BJ (cell line): ENCODE measurements at regions of chr16 and their contacts with region 1.

Region 1: DNA sequence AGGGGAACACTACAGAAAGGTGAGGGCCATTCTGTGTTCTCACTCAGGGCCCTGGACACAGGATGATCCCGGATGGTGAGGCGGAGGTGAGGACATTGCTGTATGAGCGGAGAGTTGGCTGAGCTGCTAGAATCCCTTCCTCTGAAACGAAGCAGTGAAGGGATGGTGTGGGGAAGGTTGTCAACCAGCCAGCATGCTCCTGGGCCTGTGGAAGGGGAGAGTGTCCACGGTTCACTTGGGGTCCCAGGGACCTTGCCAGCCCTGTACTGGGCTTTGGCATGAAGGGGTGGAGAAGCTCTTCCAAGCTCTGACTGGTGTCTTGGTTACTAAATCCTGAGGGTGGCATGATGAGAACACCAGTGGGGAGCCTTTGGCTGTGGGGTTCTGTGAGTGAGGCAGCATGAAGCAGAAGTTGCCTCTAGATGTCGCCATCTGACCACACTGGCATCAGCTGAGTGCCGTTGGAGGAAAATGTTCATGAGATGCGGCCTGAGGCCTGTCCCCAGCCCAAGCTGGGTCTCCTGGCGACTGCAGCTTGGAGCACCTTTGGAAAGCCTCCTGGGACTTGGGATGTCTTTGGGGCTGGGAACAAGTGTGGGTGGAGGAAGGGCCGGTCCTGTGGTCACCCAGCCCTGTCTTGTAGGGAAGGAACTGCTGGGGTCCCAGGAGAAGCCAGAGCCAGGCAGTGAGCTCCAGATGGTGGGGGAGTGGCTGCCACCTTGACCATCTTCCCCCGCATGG is 14.8 kb downstream of the PDP2 start:
- DNase-seq: no peak
- H3K4me3 ChIP-seq: no peak overlapping the region
- H3K27me3 ChIP-seq: no peaks in the 10 kb centered on the region
- CTCF ChIP-seq: peak; percentile 93

Region 2: DNA sequence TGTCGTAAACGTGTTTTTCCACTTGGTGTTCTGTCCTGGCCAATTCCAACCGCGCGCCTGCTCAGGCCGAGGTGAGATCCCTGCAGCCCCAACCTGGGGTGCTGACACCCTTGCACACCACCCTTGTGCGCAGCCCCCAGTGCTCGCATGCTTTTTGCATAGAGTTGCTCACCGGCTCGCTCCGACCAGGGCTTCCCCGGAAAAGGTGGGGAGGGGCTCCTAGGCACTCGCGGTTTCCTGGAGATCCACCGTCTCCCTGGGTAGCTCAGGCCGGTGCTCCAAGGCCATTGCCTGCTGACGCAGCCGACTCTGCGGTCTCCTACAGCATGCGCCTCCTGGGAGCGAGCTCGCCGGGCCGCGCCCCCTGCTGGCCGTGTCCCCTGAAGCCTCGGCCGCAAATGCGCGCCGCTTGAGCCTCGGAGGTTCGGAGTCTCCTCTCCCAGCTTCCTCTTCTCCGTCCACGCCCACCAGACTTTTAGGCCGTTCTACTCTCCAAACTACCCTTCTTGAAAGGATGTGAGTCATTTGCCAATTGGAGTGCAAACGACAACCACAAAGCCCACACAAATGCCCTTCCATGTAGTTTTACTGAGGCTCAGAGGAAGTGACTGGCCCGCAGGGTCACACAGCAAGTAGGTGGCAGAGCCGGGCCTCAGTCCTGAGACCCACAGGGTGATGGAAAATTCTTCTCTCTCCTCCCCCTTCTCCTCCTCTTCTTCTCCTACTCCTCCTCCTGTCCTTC is 22.0 kb before region 1 on chr16:
- CTCF ChIA-PET with region 1: interaction called, 11 read pairs
- POLR2A ChIA-PET with region 1: no interaction called
- DNase-seq: peak; percentile 97
- H3K4me3 ChIP-seq: 0 out of 2 replicates have a peak overlapping the region, but pooled peaks have one; percentile 2
- H3K27me3 ChIP-seq: no peaks in the 10 kb centered on the region
- CTCF ChIP-seq: peak; percentile 97

Region 3: DNA sequence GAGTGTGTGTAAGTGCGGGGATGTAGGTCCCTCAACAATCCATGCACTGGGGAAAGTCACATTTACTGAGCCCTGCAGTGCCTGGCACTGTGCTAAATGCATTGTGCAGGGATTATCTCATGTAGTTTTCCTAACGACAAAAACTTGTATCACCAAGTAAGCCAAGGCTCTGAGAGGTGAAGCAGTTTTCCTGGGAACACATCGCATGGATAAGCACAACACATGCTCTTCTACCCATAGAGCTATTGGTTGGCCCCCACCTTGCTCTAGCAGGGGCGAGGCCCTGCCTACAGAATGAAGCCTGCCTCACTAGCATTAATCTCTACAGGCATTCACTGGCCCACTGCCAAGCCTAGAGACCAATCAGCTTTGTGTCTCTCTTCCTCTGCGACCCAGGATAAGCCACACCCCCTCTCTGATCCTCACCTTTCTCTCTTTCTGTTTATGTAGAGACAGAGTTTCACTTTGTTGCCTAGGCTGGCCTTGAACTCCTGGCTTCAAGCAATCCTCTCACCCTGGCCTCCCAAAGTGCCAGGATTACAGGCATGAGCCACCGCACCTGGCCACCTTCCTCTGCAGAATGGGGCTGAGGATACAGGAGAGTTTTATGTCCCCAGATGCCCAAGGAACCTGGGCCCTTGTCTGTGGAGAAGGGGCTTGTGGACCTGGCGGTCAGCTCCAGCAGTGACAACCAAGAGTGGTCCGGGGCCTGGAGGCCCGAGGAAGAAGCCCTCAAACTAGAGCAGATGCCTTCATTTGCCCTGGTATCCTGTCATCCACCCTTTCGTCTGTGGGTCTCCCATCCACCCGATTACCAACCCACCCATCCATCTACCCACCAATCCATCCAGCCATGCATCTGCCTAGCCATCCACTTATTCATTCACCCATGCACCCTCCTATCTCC is 10.8 kb after region 1 on chr16:
- CTCF ChIA-PET with region 1: interaction called, 33 read pairs
- POLR2A ChIA-PET with region 1: no interaction called
- DNase-seq: no peak
- H3K4me3 ChIP-seq: no peak overlapping the region
- H3K27me3 ChIP-seq: no peaks in the 10 kb centered on the region; the same call in none of the 2 replicates
- CTCF ChIP-seq: no peak

Region 4: GRCh38 chr16:66918803-66919568 is 23.9 kb after region 1 on chr16 and contains the start of gene CDH16:
- CTCF ChIA-PET with region 1: interaction called, 118 read pairs
- POLR2A ChIA-PET with region 1: no interaction called
- DNase-seq: no peak
- H3K4me3 ChIP-seq: no peak within 1 kb of the TSS
- H3K27me3 ChIP-seq: peaks cover 19% of the 10 kb centered on the region
- CTCF ChIP-seq: no peak
- polyA plus RNA-seq, gene CDH16: not detected in 2 replicates

Region 5: DNA sequence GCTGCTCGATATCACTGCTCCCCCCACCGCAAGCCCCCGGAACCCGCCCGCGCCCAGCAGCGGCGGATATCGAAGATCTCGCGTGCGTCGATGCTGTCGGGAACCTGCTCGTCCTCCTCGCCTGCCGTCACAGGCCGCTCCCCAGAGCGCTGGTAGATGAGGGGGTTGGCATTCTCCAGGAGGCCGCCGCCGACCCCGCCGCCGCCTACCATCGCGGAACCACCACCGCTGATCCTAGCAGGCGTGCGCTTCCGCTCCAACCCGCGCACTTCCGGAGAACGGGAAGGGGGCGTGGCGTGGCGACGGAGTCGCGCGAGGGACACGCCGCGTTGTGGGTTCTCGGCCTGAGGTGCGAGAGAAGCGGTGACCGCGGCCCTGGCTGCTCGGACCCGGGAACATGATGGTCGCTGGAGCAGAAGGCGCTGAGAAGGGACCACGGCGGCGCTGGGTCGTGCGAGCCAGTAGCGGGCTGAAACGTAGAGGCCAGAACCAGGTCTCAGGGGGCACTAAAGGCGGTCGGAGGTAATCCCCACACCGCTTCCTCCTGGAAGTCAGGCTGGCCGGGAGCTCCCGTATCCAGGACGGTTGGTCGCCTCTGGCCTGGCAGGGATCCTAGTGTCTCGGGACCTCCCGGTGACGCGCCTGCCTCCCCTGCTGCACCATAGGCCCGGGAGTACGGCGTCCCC is 39.2 kb after region 1 on chr16 and contains the start of gene CIAO2B:
- CTCF ChIA-PET with region 1: interaction called, 118 read pairs
- POLR2A ChIA-PET with region 1: no interaction called
- DNase-seq: no peak
- H3K4me3 ChIP-seq: peak within 1 kb of the TSS; percentile 74
- H3K27me3 ChIP-seq: no peaks in the 10 kb centered on the region
- CTCF ChIP-seq: no peak
- polyA plus RNA-seq, gene CIAO2B: 155 and 171 TPM in 2 replicates

Region 6: GRCh38 chr16:66954097-66954659 is 59.1 kb after region 1 on chr16:
- CTCF ChIA-PET with region 1: interaction called, 16 read pairs
- POLR2A ChIA-PET with region 1: no interaction called
- DNase-seq: no peak
- H3K4me3 ChIP-seq: no peak overlapping the region
- H3K27me3 ChIP-seq: peaks cover 5% of the 10 kb centered on the region
- CTCF ChIP-seq: peak; percentile 81

Region 7: GRCh38 chr16:67159593-67160406 is 264.7 kb after region 1 on chr16 and contains the starts of genes FBXL8 and TRADD:
- CTCF ChIA-PET with region 1: interaction called, 10 read pairs
- POLR2A ChIA-PET with region 1: no interaction called
- DNase-seq: no peak
- H3K4me3 ChIP-seq: peak within 1 kb of the TSS; percentile 96
- H3K27me3 ChIP-seq: peaks cover 4% of the 10 kb centered on the region
- CTCF ChIP-seq: peak; percentile 70
- polyA plus RNA-seq, gene FBXL8: 4.1 and 5.7 TPM in 2 replicates
- polyA plus RNA-seq, gene TRADD: 11.1 and 18.6 TPM in 2 replicates